ENCODE measurements at regions of chr17 and their contacts with region 1.

Region 1: GRCh38 chr17:11948789-11949188 is 48.5 kb downstream of the ZNF18 start:
- DNase-seq: peak; percentile 91
- H3K4me3 Mint-ChIP-seq: peak overlapping the region; percentile 55
- H3K27ac Mint-ChIP-seq: peak overlapping the region; percentile 28
- H3K4me1 Mint-ChIP-seq: peaks cover 31% of the 10 kb centered on the region
- H3K27me3 Mint-ChIP-seq: no peaks in the 10 kb centered on the region
- CTCF ChIP-seq: no peak

Region 2: GRCh38 chr17:11969565-11969964 is 20.8 kb after region 1 on chr17:
- CTCF ChIA-PET with region 1: no interaction called
- POLR2A ChIA-PET with region 1: interaction called, 18 read pairs
- intact Hi-C with region 1: no loop called
- DNase-seq: peak; percentile 12
- H3K4me3 Mint-ChIP-seq: no peak overlapping the region
- H3K27ac Mint-ChIP-seq: no peak overlapping the region
- H3K4me1 Mint-ChIP-seq: peaks cover 5% of the 10 kb centered on the region
- H3K27me3 Mint-ChIP-seq: no peaks in the 10 kb centered on the region
- CTCF ChIP-seq: no peak

Region 3: DNA sequence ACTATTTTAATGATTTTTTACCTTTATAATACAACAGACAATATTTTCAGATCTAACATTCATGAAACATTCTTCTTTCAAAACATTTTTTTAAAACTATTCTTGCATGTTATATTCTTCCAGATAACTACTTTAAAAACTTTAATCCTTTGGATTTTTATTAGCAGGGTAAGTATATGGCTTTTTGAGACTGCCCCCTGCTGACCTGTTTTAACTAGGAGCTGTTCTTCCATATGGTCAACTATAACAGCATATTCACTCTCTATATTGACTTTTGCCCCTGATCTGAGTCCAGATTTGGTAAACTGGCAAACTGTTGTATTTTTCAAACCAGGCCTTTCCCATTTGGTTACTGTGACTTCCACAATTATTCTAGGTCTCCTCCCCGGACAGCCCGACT is 32.0 kb after region 1 on chr17:
- CTCF ChIA-PET with region 1: interaction called, 21 read pairs
- POLR2A ChIA-PET with region 1: interaction called, 15 read pairs
- intact Hi-C with region 1: no loop called
- DNase-seq: peak; percentile 38
- H3K4me3 Mint-ChIP-seq: no peak overlapping the region
- H3K27ac Mint-ChIP-seq: no peak overlapping the region
- H3K4me1 Mint-ChIP-seq: peaks cover 17% of the 10 kb centered on the region
- H3K27me3 Mint-ChIP-seq: no peaks in the 10 kb centered on the region
- CTCF ChIP-seq: peak; percentile 39

Measured in MCF 10A (cell line).